ENCODE measurements at regions of chr15 and their contacts with region 1.

Region 1: DNA sequence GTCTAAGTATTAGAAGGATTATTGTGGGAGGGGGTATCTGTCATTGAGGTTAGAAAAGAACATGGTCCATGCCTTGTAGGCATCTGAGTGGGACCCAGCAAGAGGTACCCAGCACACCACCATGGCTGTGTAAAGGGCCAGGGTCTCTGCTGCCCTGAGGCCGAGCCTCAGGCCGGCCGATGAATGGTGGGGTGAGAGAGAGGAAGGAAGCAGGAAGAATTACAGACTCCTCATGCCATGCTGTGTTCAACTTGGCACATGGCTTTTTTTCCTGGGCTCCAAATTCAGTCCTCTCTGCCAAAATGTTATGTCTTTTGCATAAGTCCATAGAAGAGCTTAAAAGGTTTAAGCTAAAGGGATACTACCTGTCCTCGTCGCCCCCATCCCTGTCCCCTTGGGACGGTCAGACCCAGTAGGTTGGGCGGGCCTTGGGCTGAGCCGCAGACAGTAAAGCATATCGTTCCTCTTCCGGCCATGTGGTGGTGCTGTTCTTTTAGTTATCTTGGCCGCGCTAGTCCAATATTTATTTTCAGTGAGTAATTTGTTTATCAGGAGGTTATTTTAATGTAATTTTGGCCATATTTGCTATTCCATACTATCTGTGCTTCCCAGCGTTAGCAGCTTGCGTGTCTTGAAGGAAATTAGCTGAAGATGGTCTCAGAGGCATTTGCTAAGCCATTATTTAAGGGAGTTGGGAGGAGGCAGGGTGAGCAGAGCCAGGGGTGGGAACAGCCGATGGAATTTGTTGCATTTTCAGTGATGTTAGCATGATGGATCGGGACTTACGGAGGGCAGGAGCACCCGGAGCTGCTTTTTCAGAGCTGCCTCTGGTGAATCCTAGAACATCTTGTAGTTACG is 152.4 kb downstream of the AGBL1 start:
- DNase-seq: peak; percentile 71
- H3K4me3 Mint-ChIP-seq: no peak overlapping the region
- H3K27ac Mint-ChIP-seq: no peak overlapping the region
- H3K4me1 Mint-ChIP-seq: peaks cover 4% of the 10 kb centered on the region
- H3K27me3 Mint-ChIP-seq: peaks cover 30% of the 10 kb centered on the region

Region 2: GRCh38 chr15:85618956-85619491 is 613.1 kb before region 1 on chr15:
- intact Hi-C with region 1: no loop called
- DNase-seq: peak; percentile 83
- H3K4me3 Mint-ChIP-seq: no peak overlapping the region
- H3K27ac Mint-ChIP-seq: no peak overlapping the region
- H3K4me1 Mint-ChIP-seq: peaks cover 31% of the 10 kb centered on the region
- H3K27me3 Mint-ChIP-seq: no peaks in the 10 kb centered on the region

Region 3: DNA sequence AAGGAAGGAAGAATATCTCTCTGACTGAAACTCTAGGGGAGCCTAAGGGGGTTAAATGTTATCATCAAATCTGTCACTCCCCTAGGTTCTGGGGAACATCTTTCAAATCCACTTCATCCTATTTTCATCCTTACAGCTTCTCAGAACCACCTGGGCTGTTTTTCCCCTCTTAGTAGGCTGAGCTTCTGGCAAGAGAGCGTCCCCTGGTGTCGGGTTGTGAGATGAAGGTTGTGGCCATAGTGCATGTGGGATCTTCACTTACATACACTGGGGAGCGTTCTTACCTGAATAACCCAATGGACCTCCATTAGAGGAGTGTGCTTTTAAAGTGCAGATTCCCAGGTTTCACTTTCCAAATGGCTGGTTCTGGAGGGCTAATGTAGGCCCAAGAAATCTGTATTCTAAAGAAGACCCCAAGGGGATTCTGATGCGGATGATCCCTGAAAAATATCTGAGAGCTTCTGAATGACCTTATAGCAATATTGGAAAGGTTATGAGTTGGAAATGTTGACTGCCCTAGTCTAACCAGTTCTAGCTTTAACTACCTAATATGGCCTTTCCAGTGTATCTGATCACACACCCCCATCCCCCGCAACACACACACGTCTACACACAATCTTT is 511.3 kb after region 1 on chr15:
- intact Hi-C with region 1: loop called (anchors 5 kb)
- DNase-seq: peak; percentile 82
- H3K4me3 Mint-ChIP-seq: no peak overlapping the region
- H3K27ac Mint-ChIP-seq: no peak overlapping the region
- H3K4me1 Mint-ChIP-seq: no peaks in the 10 kb centered on the region
- H3K27me3 Mint-ChIP-seq: no peaks in the 10 kb centered on the region

Region 4: DNA sequence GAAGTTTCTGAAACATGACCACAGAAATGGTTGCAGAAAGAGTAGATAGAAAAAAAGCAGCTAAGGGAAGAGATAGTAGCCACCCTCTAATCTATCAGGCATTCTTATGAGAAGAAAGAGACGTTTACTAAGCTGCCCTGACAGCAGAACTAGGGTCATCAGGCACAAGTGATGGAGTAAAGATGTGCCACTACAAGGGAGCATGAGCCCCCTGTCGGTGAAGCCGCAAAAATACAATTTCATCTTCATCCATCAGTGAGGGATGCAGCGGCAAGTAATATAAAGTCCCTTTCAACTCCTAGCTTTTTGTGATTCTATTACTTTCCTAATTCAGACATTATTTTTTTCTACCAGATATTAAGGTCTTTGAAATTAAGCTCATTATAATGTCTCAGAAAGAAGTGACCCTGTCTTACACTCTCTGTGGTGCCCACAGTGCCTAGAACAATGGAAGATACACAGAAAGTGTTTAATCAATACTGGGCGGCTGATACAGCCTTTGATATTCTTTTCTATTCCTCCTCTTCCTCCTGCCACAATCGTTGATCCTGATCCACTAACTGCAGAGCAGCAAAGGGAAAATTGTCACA is 1372.9 kb after region 1 on chr15:
- intact Hi-C with region 1: loop called (anchors 10 kb)
- DNase-seq: peak; percentile 70
- H3K4me3 Mint-ChIP-seq: no peak overlapping the region
- H3K27ac Mint-ChIP-seq: no peak overlapping the region
- H3K4me1 Mint-ChIP-seq: no peaks in the 10 kb centered on the region
- H3K27me3 Mint-ChIP-seq: peaks cover 7% of the 10 kb centered on the region

Measured in activated CD4-positive, alpha-beta T cell treated with anti-CD3 and anti-CD28 coated beads, Interleukin-2, amount 10 ng/mL, durations not matched to agents 24 days and 14 days (primary cell).